Endothelial cell of umbilical vein (primary cell): ENCODE measurements at regions of chr7 and their contacts with region 1.

Region 1: DNA sequence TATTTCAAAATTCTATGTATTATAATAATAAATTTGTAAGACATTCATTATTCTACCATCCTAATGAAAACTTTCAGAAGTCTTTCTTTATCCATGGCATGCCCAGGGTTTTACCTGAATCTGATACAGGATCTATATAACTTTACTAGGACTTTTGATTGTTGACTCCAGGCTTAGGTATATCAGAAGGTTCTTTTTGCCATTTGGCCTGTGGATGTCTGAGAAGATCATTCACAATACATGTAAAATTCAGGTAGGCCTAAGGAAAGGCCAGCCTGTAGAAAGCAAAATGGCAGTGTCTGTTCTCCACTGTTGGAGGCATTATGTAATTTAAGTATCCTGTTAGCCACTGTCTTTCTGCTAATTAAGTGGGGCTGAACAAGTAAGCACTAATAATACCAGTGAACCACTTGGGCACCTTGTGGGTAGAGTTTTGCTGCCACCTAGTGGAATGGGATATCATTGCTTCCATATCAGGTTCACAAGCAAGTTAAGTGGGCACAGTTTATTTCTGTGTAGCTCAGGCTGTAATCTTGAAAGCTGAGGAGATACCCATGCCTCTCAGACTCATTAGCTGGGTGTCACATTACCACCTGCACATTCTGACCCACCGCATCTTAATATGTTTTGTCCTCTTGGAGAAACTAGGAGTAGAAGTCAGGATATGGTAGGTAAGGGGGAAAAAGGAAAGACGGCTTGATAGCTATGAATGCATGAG is 105.5 kb downstream of the SEPTIN7 start:
- DNase-seq: peak; percentile 84
- H3K4me3 ChIP-seq: no peak overlapping the region
- H3K27ac ChIP-seq: no peak overlapping the region
- H3K4me1 ChIP-seq: no peaks in the 10 kb centered on the region
- H3K27me3 ChIP-seq: no peaks in the 10 kb centered on the region
- CTCF ChIP-seq: peak; percentile 70 to 77
- POLR2A ChIP-seq: no peak

Region 2: DNA sequence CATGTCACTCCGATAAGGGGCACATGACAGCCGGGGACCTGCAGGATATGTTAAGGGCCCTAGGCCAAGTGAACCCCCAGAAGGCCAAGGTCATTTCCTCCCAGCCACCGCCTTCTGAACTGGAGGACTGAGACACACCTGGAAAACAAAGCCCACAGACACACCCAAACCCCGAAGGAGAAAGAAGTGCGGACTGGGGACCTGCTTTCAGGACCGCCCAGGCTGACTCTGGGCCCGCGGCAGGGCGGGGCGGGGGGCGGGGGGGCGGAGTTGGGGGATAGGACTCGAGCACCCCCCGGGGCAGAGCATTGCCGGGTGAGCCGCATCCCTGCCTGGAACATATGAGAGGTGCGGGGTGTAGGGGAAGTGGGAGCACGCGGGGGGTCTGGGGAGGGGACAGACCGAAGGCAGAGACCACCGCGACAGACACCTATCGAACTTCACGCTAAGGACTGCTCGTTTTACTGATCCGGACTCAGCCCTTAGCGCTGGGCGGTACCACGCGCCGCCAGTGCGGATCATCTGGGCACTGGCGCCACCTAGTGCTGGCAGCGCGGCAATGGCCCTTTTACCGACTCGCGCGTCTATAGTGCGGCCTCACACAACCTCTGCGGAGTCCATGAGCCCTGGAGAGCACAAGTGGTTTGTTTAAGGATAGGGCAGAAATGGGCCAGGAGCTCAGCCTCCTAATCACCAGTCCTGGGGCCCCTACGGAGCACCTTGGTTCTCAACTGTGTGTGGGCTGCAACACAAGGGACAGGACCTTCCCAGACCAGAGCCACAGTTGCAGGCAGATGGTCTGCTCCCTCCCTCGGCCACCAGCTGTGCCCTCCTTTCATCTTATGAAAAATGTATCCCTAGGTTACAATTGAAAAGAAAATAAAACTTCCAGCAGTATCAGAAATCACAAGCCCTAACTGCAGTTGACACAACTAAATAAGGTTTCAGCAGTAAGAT is 369.0 kb before region 1 on chr7:
- CTCF ChIA-PET with region 1: interaction called, 3 read pairs
- POLR2A ChIA-PET with region 1: no interaction called
- dilution Hi-C with region 1: no loop called
- intact Hi-C with region 1: loop called (anchors 10 kb)
- DNase-seq: peak; percentile 70
- H3K4me3 ChIP-seq: peak overlapping the region in 1 of 3 experiments; percentile 28
- H3K27ac ChIP-seq: no peak overlapping the region
- H3K4me1 ChIP-seq: no peaks in the 10 kb centered on the region
- H3K27me3 ChIP-seq: peaks cover 0 to 5% of the 10 kb centered on the region in 2 experiments
- CTCF ChIP-seq: peak; percentile 92 to 99
- POLR2A ChIP-seq: no peak

Region 3: DNA sequence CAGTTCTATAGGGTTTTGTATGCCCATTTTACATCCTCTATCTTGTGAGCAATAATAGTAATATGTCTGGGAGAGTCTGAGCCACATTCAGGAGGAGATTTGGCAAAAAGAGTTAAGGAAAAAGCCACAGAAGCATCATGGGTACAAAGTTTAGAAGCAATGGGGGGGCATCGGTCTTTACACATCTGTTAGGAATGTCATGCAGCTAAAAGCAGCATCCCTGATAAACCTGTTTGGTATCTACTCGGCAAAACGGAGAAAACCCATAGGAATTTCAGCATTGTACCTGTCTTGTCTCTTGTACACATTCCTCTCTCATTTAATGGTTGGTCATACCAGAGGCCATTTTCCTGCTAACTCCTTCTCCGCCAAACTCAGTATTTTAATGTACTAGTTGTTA is 198.9 kb before region 1 on chr7:
- CTCF ChIA-PET with region 1: interaction called, 118 read pairs
- POLR2A ChIA-PET with region 1: interaction called, 4 read pairs
- dilution Hi-C with region 1: no loop called
- intact Hi-C with region 1: loop called (anchors 1 kb)
- DNase-seq: no peak
- H3K4me3 ChIP-seq: no peak overlapping the region
- H3K27ac ChIP-seq: no peak overlapping the region
- H3K4me1 ChIP-seq: peaks cover 6% of the 10 kb centered on the region
- H3K27me3 ChIP-seq: no peaks in the 10 kb centered on the region
- CTCF ChIP-seq: no peak
- POLR2A ChIP-seq: no peak

Region 4: DNA sequence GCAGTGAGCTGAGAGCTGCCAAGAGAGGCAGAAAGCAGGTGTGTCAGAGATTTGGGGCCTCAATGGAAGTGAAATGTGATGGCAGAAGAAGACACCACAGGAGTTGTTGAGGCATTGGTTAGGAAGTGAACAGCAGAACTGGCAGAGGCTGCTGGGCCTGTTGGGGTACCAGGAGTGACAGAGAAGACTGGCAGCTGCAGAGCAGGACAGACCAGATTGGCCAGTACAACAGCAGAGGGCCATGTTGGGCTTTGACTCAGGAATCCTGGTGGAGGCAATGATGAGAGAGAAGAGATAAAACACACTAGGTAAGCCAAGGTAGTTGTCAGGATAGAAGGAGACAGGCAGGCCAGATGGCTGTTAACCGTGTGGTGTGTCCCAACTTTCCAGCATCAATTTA is 191.5 kb before region 1 on chr7:
- CTCF ChIA-PET with region 1: interaction called, 118 read pairs
- POLR2A ChIA-PET with region 1: interaction called, 4 read pairs
- dilution Hi-C with region 1: no loop called
- intact Hi-C with region 1: no loop called
- DNase-seq: no peak
- H3K4me3 ChIP-seq: no peak overlapping the region
- H3K27ac ChIP-seq: no peak overlapping the region
- H3K4me1 ChIP-seq: no peaks in the 10 kb centered on the region
- H3K27me3 ChIP-seq: peaks cover 10 to 20% of the 10 kb centered on the region in 2 experiments
- CTCF ChIP-seq: no peak
- POLR2A ChIP-seq: no peak

Region 5: DNA sequence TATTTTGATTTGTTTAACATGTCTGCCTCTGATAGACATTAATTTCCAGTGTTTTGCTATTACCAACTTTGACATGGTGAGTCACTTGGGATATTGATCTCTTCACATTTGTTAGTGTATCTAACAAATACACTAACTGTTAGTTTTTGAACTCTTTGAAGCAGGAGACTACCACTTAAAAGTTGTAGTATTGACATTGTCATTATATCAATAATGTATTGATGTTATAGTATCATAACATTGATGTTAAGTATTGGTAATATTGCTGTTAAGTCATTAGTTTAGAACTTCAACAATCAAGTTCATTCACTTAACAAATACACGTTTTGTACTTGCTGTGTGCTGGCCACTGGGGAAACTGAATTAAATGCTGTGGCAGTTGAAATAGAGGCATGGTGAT is 97.5 kb before region 1 on chr7:
- CTCF ChIA-PET with region 1: no interaction called
- POLR2A ChIA-PET with region 1: no interaction called
- dilution Hi-C with region 1: no loop called
- intact Hi-C with region 1: no loop called
- DNase-seq: no peak
- H3K4me3 ChIP-seq: no peak overlapping the region
- H3K27ac ChIP-seq: no peak overlapping the region
- H3K4me1 ChIP-seq: peaks cover 4% of the 10 kb centered on the region
- H3K27me3 ChIP-seq: no peaks in the 10 kb centered on the region
- CTCF ChIP-seq: no peak
- POLR2A ChIP-seq: no peak

Region 6: DNA sequence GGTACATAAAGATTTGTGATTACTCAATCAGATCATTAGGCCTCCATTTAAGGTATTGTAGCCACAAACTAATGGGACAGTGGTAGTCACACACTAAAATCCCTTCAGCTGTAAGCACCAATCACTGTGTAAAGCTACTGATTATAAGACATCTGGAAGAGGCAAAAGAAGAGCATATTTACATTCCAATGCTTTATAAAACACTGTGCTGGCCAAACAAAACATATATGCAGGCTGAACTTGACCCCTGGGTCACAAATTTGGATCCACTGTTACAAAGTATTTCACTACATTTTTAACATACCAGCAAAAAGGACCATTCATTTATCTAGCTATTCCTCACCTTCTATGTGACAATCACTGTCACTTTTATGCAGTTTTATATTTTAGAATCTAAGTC is 441.9 kb after region 1 on chr7:
- CTCF ChIA-PET with region 1: no interaction called
- POLR2A ChIA-PET with region 1: no interaction called
- dilution Hi-C with region 1: no loop called
- intact Hi-C with region 1: no loop called
- DNase-seq: peak; percentile 43
- H3K4me3 ChIP-seq: no peak overlapping the region
- H3K27ac ChIP-seq: no peak overlapping the region
- H3K4me1 ChIP-seq: peaks cover 10% of the 10 kb centered on the region
- H3K27me3 ChIP-seq: no peaks in the 10 kb centered on the region
- CTCF ChIP-seq: no peak
- POLR2A ChIP-seq: no peak